ENCODE measurements at regions of chr5 and their contacts with region 1.

Region 1: DNA sequence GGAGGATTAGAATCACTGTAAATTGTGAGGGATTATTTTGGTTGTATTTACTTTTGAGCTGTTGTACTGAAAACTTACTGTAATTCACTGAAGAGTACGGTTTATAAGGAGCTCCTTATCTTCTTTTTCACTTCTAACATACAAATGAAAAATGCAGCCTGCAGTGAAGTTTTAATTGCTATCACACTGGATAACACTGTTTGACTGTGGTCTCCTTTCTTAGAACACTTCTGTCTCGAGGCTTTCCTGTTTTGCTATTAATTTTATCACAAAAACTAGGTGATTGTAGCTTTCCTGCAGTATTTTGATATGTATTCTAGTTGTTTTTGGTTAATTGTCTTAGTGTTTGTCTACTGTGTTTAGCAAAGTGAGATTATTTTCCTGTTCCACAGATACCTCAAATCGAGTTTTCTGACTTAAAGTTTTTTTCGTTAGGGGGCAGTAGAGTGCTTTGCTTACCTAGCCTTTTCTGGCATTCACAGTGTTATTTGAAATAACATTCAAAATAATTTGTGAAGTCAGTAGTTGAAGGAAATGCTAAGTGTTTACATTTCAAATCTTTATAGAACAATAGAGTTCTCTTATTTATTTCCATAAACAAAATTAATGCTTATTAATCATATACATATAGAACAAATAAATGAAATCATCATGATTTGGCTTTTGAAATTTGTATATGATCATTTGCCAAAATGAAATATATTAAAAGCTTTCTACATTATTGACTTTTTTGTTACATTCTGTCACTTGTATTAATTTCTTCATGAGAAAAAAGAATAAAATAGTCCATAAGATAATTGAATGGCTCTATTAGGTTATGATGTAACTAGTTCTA is 52.9 kb downstream of the COMMD10 start:
- DNase-seq: peak; percentile 68
- ATAC-seq: peak; percentile 58
- H3K4me3 ChIP-seq: no peak overlapping the region
- H3K27ac ChIP-seq: no peak overlapping the region
- H3K4me1 ChIP-seq: no peaks in the 10 kb centered on the region
- H3K27me3 ChIP-seq: no peaks in the 10 kb centered on the region
- CTCF ChIP-seq: peak; percentile 74

Region 2: DNA sequence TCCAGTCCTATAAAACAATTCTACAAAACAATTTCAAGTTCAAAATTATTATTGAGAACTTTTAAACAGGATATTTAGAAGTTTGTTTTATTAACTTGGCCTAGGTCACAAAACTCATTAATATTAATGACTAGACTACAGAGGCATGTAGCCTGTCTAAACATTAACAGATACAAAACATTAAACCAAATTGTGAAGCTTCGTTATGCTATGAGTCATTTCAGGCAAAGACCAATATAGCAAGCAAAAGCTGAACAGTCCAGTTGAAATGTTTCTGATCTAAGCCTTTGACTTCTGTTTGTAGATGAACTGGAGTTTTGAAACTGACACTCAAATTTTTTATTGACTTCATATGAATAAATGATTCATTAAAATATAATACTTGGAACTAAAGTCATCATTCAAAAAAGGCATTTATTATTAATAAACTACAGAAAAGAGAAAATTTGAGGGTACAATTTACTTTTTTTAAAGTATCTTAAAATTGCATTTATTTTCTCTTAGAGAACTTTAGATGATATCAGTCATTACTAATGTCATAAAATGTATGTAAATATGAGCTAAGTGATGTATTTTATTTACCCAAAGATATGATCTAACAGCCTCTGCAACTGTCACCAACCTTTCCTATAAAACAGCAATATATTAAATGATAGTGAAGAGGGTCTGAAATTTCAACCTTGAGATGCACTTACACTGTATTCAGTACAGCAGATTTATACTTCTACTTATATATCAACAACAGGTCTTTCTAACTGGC is 135.9 kb after region 1 on chr5:
- CTCF ChIA-PET with region 1: no interaction called
- POLR2A ChIA-PET with region 1: no interaction called
- intact Hi-C with region 1: loop called (anchors 2 kb)
- DNase-seq: peak; percentile 48
- ATAC-seq: peak; percentile 88
- H3K4me3 ChIP-seq: no peak overlapping the region
- H3K27ac ChIP-seq: peak overlapping the region; percentile 59
- H3K4me1 ChIP-seq: peaks cover 18% of the 10 kb centered on the region
- H3K27me3 ChIP-seq: no peaks in the 10 kb centered on the region
- CTCF ChIP-seq: no peak

Region 3: GRCh38 chr5:116492016-116492623 is 354.4 kb after region 1 on chr5:
- CTCF ChIA-PET with region 1: no interaction called
- POLR2A ChIA-PET with region 1: no interaction called
- intact Hi-C with region 1: loop called (anchors 5 kb)
- DNase-seq: peak; percentile 92
- ATAC-seq: peak; percentile 93
- H3K4me3 ChIP-seq: no peak overlapping the region
- H3K27ac ChIP-seq: peak overlapping the region; percentile 24; the same call in 1 of the 2 replicates
- H3K4me1 ChIP-seq: peaks cover 52% of the 10 kb centered on the region
- H3K27me3 ChIP-seq: no peaks in the 10 kb centered on the region
- CTCF ChIP-seq: no peak

Region 4: GRCh38 chr5:116557669-116558271 is 420.0 kb after region 1 on chr5:
- CTCF ChIA-PET with region 1: no interaction called
- POLR2A ChIA-PET with region 1: no interaction called
- intact Hi-C with region 1: loop called (anchors 5 kb)
- DNase-seq: peak; percentile 38
- ATAC-seq: peak; percentile 46; the same call in 1 of the 2 replicates
- H3K4me3 ChIP-seq: no peak overlapping the region
- H3K27ac ChIP-seq: no peak overlapping the region
- H3K4me1 ChIP-seq: no peaks in the 10 kb centered on the region
- H3K27me3 ChIP-seq: no peaks in the 10 kb centered on the region
- CTCF ChIP-seq: peak; percentile 72

Region 5: DNA sequence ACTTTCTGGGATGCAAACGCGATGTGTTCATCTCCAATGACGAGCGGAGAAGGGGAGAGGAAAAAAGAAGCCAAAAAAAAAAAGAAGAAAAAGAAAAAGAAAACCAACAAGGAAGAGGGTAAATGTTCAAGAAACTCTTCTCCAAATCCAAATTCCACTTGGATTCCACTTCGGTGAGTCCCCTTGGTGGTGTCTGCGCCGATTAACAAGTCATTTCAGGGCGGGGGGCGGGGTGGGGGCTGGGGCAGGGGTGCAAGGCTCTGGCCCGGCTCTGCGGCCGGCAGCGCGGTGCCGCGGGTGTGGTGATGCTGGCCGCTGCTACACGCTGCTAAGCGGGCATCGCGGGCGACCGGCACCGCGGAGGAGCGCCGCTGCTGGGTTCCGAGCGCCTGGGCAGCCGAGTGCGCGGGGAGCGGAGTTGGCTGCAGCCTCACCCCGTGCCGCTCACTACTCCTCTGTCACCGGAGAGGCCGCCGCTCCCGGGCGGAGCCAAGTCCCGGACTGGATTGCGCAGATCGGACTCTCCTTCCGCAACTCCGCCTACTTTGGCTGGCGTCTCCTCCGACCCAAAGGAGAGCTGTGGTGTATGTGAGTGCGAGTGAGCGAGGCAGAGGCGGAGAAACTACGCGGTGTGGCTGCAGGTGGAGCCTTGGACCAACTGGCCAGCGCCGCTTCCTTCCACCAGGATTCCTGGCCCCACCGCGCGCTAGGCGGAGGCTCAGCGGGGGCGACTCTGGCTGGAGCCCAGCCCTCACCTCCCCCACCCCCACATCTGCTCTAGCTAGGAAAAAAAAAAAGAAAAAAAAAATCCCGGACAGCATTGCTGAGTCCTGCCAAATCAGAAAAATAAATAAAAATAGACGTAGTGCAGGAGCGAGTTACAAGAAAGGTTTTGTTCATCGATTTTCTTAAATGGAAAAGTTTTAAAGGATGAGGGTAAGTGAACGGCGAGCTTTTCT is 436.9 kb after region 1 on chr5 and contains the start of gene SEMA6A:
- CTCF ChIA-PET with region 1: no interaction called
- POLR2A ChIA-PET with region 1: no interaction called
- intact Hi-C with region 1: loop called (anchors 5 kb)
- DNase-seq: peak; percentile 77
- ATAC-seq: peak; percentile 81
- H3K4me3 ChIP-seq: peak within 1 kb of the TSS; percentile 68
- H3K27ac ChIP-seq: no peak within 1 kb of the TSS
- H3K4me1 ChIP-seq: peaks cover 11% of the 10 kb centered on the region; the same call in 1 of the 2 replicates
- H3K27me3 ChIP-seq: peaks cover 61% of the 10 kb centered on the region
- CTCF ChIP-seq: no peak
- total RNA-seq, gene SEMA6A: not detected in 2 replicates

Region 6: DNA sequence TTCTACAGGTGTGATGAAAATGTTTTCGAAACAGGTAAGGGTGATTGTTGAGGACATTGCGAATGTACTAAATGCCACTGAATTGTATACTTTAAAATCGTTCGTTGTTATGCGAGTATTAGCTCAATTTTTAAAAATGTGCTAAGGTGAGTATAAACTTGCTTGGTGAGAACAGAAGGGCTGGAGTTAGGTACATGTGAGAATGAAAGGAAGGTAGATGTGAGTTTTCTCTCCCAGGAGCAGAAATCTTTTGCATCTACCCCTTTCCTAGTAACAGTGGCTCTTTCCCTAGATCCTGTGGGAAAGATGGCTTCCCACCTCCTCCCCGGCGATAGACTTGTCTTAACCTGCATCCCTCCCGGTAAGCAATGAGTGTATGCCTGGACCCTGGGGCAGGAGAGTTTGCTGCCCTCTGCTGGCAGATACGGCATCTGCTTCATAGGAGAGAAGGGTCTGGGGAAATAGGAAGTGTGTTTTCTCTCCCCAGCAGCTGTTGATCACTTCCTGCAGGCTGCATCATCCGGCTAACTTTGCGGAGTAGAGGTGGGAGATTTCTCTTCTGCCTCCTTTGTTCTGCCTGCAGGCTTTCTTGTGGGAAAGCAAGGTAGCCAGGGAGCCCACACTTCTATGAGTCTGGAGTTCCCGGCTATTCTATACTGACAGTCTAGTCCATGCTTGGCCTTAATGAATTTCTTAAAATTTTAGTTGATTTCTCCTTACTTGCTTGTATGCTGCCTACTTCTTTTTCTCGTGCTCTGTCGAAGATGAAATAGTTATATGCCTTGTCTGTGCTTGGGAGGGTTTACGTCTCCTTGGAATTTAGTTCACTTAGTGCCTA is 810.1 kb after region 1 on chr5:
- CTCF ChIA-PET with region 1: no interaction called
- POLR2A ChIA-PET with region 1: no interaction called
- intact Hi-C with region 1: loop called (anchors 5 kb)
- DNase-seq: peak; percentile 61
- ATAC-seq: no peak; the same call in 1 of the 2 replicates
- H3K4me3 ChIP-seq: no peak overlapping the region
- H3K27ac ChIP-seq: no peak overlapping the region
- H3K4me1 ChIP-seq: no peaks in the 10 kb centered on the region
- H3K27me3 ChIP-seq: no peaks in the 10 kb centered on the region
- CTCF ChIP-seq: peak; percentile 61